ENCODE measurements at regions of chr7 and their contacts with region 1.

Region 1: DNA sequence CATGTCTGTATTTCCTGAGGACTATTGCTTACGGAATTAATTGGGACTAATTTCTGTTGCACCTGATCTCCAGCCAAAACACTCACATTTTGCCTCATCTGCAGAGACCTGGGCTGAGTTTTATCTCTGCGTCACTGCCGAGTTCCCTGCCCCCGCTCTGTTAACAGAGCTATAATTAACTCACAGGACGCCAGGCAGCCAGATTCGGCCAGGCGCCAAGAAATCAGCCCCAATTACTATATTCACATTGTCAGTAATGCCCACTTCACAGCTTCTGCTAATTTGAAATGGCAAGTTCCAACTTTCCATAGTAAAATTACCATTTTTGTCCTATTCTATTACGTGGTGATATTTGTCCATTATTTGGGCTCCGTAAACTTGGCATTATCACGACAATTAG is 130.5 kb downstream of the CUX1 start:
- DNase-seq: peak; percentile 80
- H3K4me3 ChIP-seq: no peak overlapping the region
- H3K27ac ChIP-seq: no peak overlapping the region
- H3K4me1 ChIP-seq: peaks cover 25% of the 10 kb centered on the region
- H3K27me3 ChIP-seq: no peaks in the 10 kb centered on the region
- CTCF ChIP-seq: no peak
- POLR2A ChIP-seq: no peak

Region 2: GRCh38 chr7:101848208-101848951 is 99.5 kb before region 1 on chr7:
- CTCF ChIA-PET with region 1: no interaction called
- POLR2A ChIA-PET with region 1: no interaction called
- dilution Hi-C with region 1: no loop called
- intact Hi-C with region 1: no loop called
- DNase-seq: no peak
- H3K4me3 ChIP-seq: no peak overlapping the region
- H3K27ac ChIP-seq: no peak overlapping the region
- H3K4me1 ChIP-seq: no peaks in the 10 kb centered on the region
- H3K27me3 ChIP-seq: no peaks in the 10 kb centered on the region
- CTCF ChIP-seq: no peak
- POLR2A ChIP-seq: no peak

Region 3: DNA sequence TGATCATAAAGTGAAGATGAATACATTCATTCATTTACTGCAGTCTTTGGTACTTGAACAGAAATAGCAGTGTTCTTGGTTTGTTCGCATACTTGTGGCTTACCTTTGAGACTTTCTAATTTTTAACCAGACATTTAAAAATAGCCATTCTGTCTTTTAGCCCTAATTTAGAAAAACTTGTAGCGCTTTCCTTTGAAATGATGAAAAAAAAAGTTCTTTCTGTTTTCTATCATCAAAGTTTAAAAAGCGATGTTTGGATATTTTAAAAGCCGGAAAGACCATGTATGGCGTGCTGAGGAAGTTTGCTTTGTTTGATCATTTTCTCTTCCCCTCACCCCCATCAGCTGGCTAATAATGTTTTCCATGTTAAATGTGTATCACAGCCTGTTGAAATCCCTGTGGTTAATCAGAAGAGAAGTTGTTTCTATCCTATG is 14.2 kb before region 1 on chr7:
- CTCF ChIA-PET with region 1: interaction called, 4 read pairs
- POLR2A ChIA-PET with region 1: no interaction called
- dilution Hi-C with region 1: no loop called
- intact Hi-C with region 1: loop called (anchors 2 kb)
- DNase-seq: no peak
- H3K4me3 ChIP-seq: no peak overlapping the region
- H3K27ac ChIP-seq: no peak overlapping the region
- H3K4me1 ChIP-seq: peaks cover 5% of the 10 kb centered on the region
- H3K27me3 ChIP-seq: no peaks in the 10 kb centered on the region
- CTCF ChIP-seq: no peak
- POLR2A ChIP-seq: no peak